Gastrocnemius medialis (tissue), 4 donors: ENCODE measurements at regions of chr2 and their contacts with region 1.

Region 1: DNA sequence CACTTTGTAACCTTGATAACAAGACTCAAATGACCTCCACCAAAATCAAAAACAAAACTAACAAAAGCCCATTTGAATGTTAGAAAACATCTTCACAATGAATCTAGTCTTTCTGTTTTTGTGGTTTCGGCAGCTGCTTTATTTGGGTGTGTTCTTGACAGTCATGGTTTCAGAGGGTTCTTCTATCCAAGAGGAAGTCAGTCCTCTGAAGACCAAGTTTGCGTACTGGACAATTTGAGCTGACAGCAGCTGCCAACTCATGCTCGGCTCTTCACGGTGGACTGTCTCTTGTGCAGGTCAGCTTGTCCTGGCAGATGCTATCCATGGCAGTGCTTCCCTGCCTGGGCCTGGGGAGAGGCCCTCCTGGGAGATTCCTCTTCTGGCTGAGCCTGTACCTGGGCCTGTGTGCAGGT is 91.0 kb downstream of the TMEM17 start:
- DNase-seq: no peak
- ATAC-seq: no peak
- H3K4me3 ChIP-seq: no peak overlapping the region
- H3K27ac ChIP-seq: no peak overlapping the region
- H3K4me1 ChIP-seq: peaks cover 15 to 16% of the 10 kb centered on the region in 2 donors
- H3K27me3 ChIP-seq: no peaks in the 10 kb centered on the region
- CTCF ChIP-seq: no peak
- POLR2A ChIP-seq: no peak

Region 2: GRCh38 chr2:61910603-61911002 is 504.4 kb before region 1 on chr2:
- in situ Hi-C with region 1: loop called in 3 of 4 experiments (anchors 5 kb)
- intact Hi-C with region 1: no loop called
- DNase-seq: no peak
- ATAC-seq: no peak
- H3K4me3 ChIP-seq: no peak overlapping the region
- H3K27ac ChIP-seq: no peak overlapping the region
- H3K4me1 ChIP-seq: peaks cover 16 to 22% of the 10 kb centered on the region in 2 donors
- H3K27me3 ChIP-seq: no peaks in the 10 kb centered on the region
- CTCF ChIP-seq: no peak
- POLR2A ChIP-seq: no peak

Region 3: GRCh38 chr2:61924895-61925663 is 489.9 kb before region 1 on chr2:
- in situ Hi-C with region 1: loop called in 1 of 4 experiments (anchors 5 kb)
- intact Hi-C with region 1: no loop called
- DNase-seq: no peak
- ATAC-seq: no peak
- H3K4me3 ChIP-seq: no peak overlapping the region
- H3K27ac ChIP-seq: no peak overlapping the region
- H3K4me1 ChIP-seq: peaks cover 0 to 16% of the 10 kb centered on the region in 2 donors
- H3K27me3 ChIP-seq: no peaks in the 10 kb centered on the region
- CTCF ChIP-seq: no peak
- POLR2A ChIP-seq: no peak

Region 4: DNA sequence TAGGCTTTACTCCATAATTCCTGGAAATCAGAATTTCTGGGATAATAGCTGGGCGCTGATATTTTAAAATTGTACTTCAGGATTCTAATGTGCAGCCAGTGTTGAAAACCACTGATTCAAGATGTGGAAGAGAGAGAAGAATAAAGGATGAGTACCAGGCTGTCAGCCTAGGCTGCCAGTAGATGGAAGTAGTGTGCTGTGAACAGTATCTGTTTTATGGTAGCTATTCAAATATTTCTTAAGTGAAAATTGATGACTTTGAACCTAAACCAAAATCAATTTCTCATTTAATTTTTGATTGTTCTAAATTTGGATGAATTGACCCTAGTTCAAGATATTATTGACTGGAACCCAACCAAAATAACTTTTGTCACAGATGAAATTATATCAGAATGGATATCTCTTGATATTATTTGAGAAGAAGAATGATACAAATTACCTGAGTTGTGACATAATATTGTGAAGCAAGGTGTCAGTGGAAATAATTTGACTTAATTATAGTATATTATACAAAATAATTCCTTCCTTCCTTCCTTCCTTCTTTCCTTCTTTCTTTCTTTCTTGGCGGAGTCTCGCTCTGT is 421.5 kb before region 1 on chr2:
- in situ Hi-C with region 1: loop called in 3 of 4 experiments (anchors 10 kb)
- intact Hi-C with region 1: loop called (anchors 5 kb)
- DNase-seq: no peak
- ATAC-seq: no peak
- H3K4me3 ChIP-seq: no peak overlapping the region
- H3K27ac ChIP-seq: no peak overlapping the region
- H3K4me1 ChIP-seq: peaks cover 3 to 9% of the 10 kb centered on the region in 2 donors
- H3K27me3 ChIP-seq: no peaks in the 10 kb centered on the region
- CTCF ChIP-seq: peak; percentile 17 to 52 (median 41)
- POLR2A ChIP-seq: no peak

Region 5: GRCh38 chr2:62287899-62288880 is 126.8 kb before region 1 on chr2:
- in situ Hi-C with region 1: no loop called
- intact Hi-C with region 1: no loop called
- DNase-seq: peak; percentile 13 to 17
- ATAC-seq: no peak
- H3K4me3 ChIP-seq: no peak overlapping the region
- H3K27ac ChIP-seq: peak overlapping the region in 1 of 4 donors; percentile 12
- H3K4me1 ChIP-seq: peaks cover 14 to 16% of the 10 kb centered on the region in 2 donors
- H3K27me3 ChIP-seq: no peaks in the 10 kb centered on the region
- CTCF ChIP-seq: no peak
- POLR2A ChIP-seq: no peak